A673 (cell line): ENCODE measurements at regions of chr4 and their contacts with region 1.

Region 1: GRCh38 chr4:8403173-8403753 is 37.3 kb downstream of the ACOX3 start:
- DNase-seq: peak; percentile 78
- H3K4me3 ChIP-seq: no peak overlapping the region
- H3K27ac ChIP-seq: no peak overlapping the region
- H3K4me1 ChIP-seq: no peaks in the 10 kb centered on the region
- H3K27me3 ChIP-seq: no peaks in the 10 kb centered on the region
- CTCF ChIP-seq: peak; percentile 91

Region 2: GRCh38 chr4:8176547-8177399 is 226.5 kb before region 1 on chr4:
- CTCF ChIA-PET with region 1: interaction called, 7 read pairs
- POLR2A ChIA-PET with region 1: no interaction called
- intact Hi-C with region 1: loop called (anchors 2 kb)
- DNase-seq: peak; percentile 58
- H3K4me3 ChIP-seq: no peak overlapping the region
- H3K27ac ChIP-seq: no peak overlapping the region
- H3K4me1 ChIP-seq: peaks cover 7% of the 10 kb centered on the region
- H3K27me3 ChIP-seq: no peaks in the 10 kb centered on the region
- CTCF ChIP-seq: peak; percentile 80

Region 3: GRCh38 chr4:8274765-8275547 is 128.3 kb before region 1 on chr4:
- CTCF ChIA-PET with region 1: interaction called, 3 read pairs
- POLR2A ChIA-PET with region 1: no interaction called
- intact Hi-C with region 1: loop called (anchors 10 kb)
- DNase-seq: peak; percentile 97
- H3K4me3 ChIP-seq: no peak overlapping the region
- H3K27ac ChIP-seq: peak overlapping the region; percentile 76
- H3K4me1 ChIP-seq: peaks cover 48% of the 10 kb centered on the region
- H3K27me3 ChIP-seq: peaks cover 12% of the 10 kb centered on the region
- CTCF ChIP-seq: peak; percentile 58